WTC11 (cell line): ENCODE measurements at regions of chr19 and their contacts with region 1.

Region 1: GRCh38 chr19:7497292-7497691 is 8.5 kb upstream of the PEX11G start:
- DNase-seq: peak; percentile 53
- ATAC-seq: peak; percentile 78
- H3K4me3 Mint-ChIP-seq: no peak overlapping the region
- H3K27ac Mint-ChIP-seq: no peak overlapping the region
- H3K4me1 Mint-ChIP-seq: no peaks in the 10 kb centered on the region
- H3K27me3 Mint-ChIP-seq: peaks cover 69% of the 10 kb centered on the region
- CTCF ChIP-seq: 0 out of 2 replicates have a peak, but pooled peaks have one; percentile 15

Region 2: GRCh38 chr19:7460562-7460966 is 36.7 kb before region 1 on chr19:
- CTCF ChIA-PET with region 1: interaction called, 23 read pairs
- POLR2A ChIA-PET with region 1: no interaction called
- DNase-seq: no peak
- ATAC-seq: no peak
- H3K4me3 Mint-ChIP-seq: no peak overlapping the region
- H3K27ac Mint-ChIP-seq: no peak overlapping the region
- H3K4me1 Mint-ChIP-seq: no peaks in the 10 kb centered on the region
- H3K27me3 Mint-ChIP-seq: no peaks in the 10 kb centered on the region; the same call in 1 of the 2 replicates
- CTCF ChIP-seq: no peak

Region 3: DNA sequence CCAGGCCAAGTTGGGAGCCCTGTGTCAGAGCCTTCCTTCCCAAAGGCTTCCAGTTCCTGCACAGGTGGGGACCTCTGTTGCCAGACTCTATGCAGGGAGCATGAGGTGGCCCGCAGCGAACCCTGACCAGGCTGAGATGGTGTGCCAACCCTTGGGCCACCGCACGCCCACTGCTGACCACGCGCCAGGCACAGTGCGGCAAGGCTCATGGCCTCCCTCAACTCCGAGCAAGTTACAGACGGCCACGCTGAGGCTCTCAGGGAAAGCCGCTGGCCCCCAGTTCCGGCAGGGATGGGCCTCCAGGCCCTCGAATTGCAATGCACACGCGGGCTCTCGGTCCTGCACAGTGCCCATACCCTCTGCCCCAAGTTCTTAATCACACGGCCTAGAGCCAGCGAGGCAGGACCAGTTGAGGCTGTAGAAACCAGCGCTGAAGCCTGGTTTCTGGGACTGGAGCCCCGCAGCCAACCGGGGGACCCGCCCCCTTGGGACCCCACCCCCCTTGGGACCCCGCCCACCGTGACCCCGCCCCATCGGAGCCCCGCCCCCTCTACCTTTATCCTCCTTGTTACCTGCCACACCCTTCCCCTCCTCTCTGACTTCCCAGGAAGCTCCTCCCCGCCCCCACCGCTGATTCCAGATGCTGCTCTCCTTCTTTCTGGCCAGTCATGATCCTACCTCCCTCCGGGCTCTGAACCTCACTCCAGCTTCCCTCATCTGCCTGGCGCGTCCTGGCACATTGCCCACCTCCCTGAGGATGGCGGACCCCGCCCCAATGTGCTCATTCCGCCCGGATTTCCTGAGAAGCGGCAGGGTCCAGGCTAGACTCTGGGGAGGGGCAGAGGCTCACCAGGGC is 14.5 kb before region 1 on chr19:
- CTCF ChIA-PET with region 1: interaction called, 16 read pairs
- POLR2A ChIA-PET with region 1: no interaction called
- DNase-seq: peak; percentile 89
- ATAC-seq: peak; percentile 91
- H3K4me3 Mint-ChIP-seq: peak overlapping the region; percentile 69
- H3K27ac Mint-ChIP-seq: peak overlapping the region; percentile 38
- H3K4me1 Mint-ChIP-seq: peaks cover 16% of the 10 kb centered on the region
- H3K27me3 Mint-ChIP-seq: no peaks in the 10 kb centered on the region; the same call in 1 of the 2 replicates
- CTCF ChIP-seq: no peak

Region 4: GRCh38 chr19:7515645-7516151 is 18.4 kb after region 1 on chr19 and contains the start of gene ZNF358:
- CTCF ChIA-PET with region 1: interaction called, 16 read pairs
- POLR2A ChIA-PET with region 1: no interaction called
- DNase-seq: peak; percentile 87
- ATAC-seq: peak; percentile 92
- H3K4me3 Mint-ChIP-seq: peak within 1 kb of the TSS; percentile 79
- H3K27ac Mint-ChIP-seq: peak within 1 kb of the TSS; percentile 85
- H3K4me1 Mint-ChIP-seq: peaks cover 17% of the 10 kb centered on the region
- H3K27me3 Mint-ChIP-seq: peaks cover 15% of the 10 kb centered on the region
- CTCF ChIP-seq: no peak
- total RNA-seq, gene ZNF358: 37.5 to 47.5 TPM (median 47.3 TPM) in 3 replicates

Region 5: DNA sequence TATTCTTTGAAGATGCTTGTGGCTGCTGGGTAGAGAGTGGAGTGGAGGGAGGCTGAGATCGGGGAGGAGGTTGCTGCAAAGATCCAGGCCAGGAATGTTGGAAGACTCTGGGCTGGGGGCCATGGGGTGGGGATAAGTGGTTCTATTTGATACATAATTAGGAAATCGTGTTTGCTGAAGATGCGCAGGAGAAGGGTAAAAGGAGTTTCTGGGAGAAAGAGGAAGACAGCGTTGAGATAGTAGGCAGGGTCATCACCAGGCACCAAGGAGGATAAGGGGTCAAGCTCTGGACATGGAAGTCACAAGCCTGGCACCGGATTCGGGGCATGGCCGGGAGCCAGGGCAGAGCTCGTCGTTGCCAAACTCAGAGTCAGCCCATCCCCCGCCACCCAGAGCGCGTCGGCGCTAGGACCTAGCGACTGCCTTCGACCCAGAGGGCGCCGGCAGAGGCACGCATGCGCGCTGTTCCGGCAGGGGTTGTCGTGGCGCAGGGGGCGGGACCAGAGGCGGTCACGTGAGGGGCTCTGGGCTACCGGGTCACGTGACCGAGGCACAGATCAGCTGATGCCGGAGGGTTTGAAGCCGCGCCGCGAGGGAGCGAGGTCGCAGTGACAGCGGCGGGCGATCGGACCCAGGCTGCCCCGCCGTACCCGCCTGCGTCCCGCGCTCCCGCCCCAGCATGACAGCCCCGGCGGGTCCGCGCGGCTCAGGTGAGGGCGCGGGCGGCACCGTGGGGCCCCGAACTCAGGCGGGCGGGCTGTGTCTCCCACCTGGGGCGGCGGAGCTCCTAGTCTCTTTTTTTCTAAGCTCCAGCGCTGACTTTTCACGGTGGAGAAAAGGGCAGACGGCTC is 25.0 kb after region 1 on chr19 and contains the start of gene MCOLN1:
- CTCF ChIA-PET with region 1: interaction called, 16 read pairs
- POLR2A ChIA-PET with region 1: interaction called, 4 read pairs
- DNase-seq: peak; percentile 100
- ATAC-seq: peak; percentile 91
- H3K4me3 Mint-ChIP-seq: peak within 1 kb of the TSS; percentile 77
- H3K27ac Mint-ChIP-seq: peak within 1 kb of the TSS; percentile 21
- H3K4me1 Mint-ChIP-seq: peaks cover 9% of the 10 kb centered on the region; the same call in 1 of the 2 replicates
- H3K27me3 Mint-ChIP-seq: no peaks in the 10 kb centered on the region; the same call in 1 of the 2 replicates
- CTCF ChIP-seq: no peak
- total RNA-seq, gene MCOLN1: 15.0 to 19.7 TPM (median 16.7 TPM) in 3 replicates